Mammary epithelial cell (primary cell): ENCODE measurements at regions of chr11 and their contacts with region 1.

Region 1: GRCh38 chr11:65027213-65028067 is at the start of gene SNX15:
- DNase-seq: peak; percentile 96
- H3K4me3 ChIP-seq: peak within 1 kb of the TSS; percentile 54 to 80 (median 72)
- H3K27ac ChIP-seq: peak within 1 kb of the TSS; percentile 41
- H3K4me1 ChIP-seq: peaks cover 11% of the 10 kb centered on the region
- H3K27me3 ChIP-seq: no peaks in the 10 kb centered on the region
- CTCF ChIP-seq: peak; percentile 34 to 66
- total RNA-seq, gene SNX15: 12.3 to 19.7 TPM

Region 2: GRCh38 chr11:65003282-65003681 is 24.2 kb before region 1 on chr11:
- CTCF ChIA-PET with region 1: no interaction called
- dilution Hi-C with region 1: no loop called
- in situ Hi-C with region 1: no loop called
- intact Hi-C with region 1: loop called (anchors 2 kb)
- DNase-seq: no peak
- H3K4me3 ChIP-seq: no peak overlapping the region
- H3K27ac ChIP-seq: no peak overlapping the region
- H3K4me1 ChIP-seq: peaks cover 20% of the 10 kb centered on the region
- H3K27me3 ChIP-seq: no peaks in the 10 kb centered on the region
- CTCF ChIP-seq: no peak

Region 3: GRCh38 chr11:65078151-65078550 is 50.7 kb after region 1 on chr11:
- CTCF ChIA-PET with region 1: no interaction called
- dilution Hi-C with region 1: no loop called
- in situ Hi-C with region 1: no loop called
- intact Hi-C with region 1: loop called (anchors 1 kb)
- DNase-seq: peak; percentile 14
- H3K4me3 ChIP-seq: no peak overlapping the region
- H3K27ac ChIP-seq: no peak overlapping the region
- H3K4me1 ChIP-seq: peaks cover 30% of the 10 kb centered on the region
- H3K27me3 ChIP-seq: no peaks in the 10 kb centered on the region
- CTCF ChIP-seq: peak; percentile 72 to 75

Region 4: GRCh38 chr11:65117216-65118096 is 90.0 kb after region 1 on chr11 and contains the start of gene ZNHIT2:
- CTCF ChIA-PET with region 1: no interaction called
- dilution Hi-C with region 1: no loop called
- in situ Hi-C with region 1: no loop called
- intact Hi-C with region 1: loop called (anchors 1 kb)
- DNase-seq: peak; percentile 98
- H3K4me3 ChIP-seq: peak within 1 kb of the TSS; percentile 74 to 82 (median 81)
- H3K27ac ChIP-seq: peak within 1 kb of the TSS; percentile 74
- H3K4me1 ChIP-seq: peaks cover 33% of the 10 kb centered on the region
- H3K27me3 ChIP-seq: no peaks in the 10 kb centered on the region
- CTCF ChIP-seq: peak; percentile 84 to 95
- total RNA-seq, gene ZNHIT2: 13.6 to 15.2 TPM

Region 5: DNA sequence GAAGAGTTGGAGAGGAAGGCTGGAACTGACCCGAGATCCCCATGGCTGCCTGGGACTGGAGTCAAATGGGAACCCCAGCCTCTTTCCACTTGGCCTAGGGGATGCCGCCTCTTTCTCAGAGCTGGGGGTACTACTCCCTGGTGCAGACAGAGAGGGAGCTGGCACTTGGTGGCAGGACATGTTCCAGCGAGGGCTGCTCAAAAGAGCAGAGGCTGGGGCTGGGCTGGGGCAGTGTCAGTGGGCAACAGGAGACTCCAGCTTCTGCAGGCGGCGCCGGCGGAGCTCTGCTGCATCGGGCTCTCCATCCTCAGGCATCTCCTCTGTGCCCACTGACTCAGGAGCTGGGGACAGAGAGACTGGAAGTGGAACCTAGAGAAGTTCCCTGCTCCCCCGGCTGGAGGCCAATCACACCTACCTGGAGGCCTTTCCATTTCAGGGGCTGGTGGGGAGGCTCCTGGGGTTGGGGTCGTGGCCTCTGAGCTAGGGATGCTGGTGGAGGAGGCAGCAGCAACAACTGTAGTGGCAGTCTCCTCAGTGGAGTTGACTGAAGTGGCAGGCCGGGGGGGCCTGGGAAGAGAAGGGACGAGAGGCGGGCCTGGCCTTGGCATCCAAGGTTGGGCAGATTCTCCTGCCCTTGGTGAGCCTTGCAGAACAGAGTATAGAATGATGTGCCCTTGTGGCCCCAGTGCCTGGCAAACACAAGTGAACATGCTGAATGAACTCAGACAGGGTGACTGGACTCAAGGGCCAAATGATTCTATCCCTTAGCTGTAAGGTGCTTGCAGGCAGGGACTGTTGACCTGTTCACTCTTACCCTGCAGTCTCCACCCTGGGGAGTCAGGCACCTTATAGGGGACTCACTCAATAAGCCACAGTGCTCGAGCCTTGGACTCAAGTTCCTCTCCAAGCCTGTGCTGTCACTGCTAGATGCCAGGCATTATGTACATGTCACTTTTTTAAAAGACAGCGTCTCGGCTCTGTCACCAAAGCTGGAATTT is 101.0 kb after region 1 on chr11:
- CTCF ChIA-PET with region 1: no interaction called
- dilution Hi-C with region 1: no loop called
- in situ Hi-C with region 1: no loop called
- intact Hi-C with region 1: no loop called
- DNase-seq: no peak
- H3K4me3 ChIP-seq: no peak overlapping the region
- H3K27ac ChIP-seq: no peak overlapping the region
- H3K4me1 ChIP-seq: peaks cover 5% of the 10 kb centered on the region
- H3K27me3 ChIP-seq: no peaks in the 10 kb centered on the region
- CTCF ChIP-seq: no peak